Heart right ventricle (tissue), 16 donors: ENCODE measurements at regions of chr13 and their contacts with region 1.

Region 1: DNA sequence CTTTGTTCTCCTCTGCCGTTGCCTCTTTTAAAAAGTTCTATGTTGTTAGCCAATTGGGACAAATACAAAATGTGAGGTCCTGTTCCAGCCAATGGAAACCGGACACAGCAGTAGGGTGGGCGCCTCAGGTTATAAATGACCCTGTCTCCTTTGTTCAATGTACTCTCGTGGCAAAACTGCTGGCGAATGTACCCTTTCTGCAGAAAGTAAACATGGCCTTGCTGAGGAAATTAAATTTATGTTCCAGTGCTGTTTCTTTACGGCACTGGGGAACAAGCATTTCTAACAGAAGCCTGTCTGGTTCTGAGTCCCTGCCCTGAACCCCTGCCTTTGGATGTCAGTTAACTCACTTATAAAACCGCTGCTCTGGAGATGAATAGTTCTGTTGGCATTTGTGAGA is 140.7 kb downstream of the PCCA start:
- DNase-seq: no peak
- ATAC-seq: no peak
- H3K4me3 ChIP-seq: no peak overlapping the region
- H3K27ac ChIP-seq: no peak overlapping the region
- H3K4me1 ChIP-seq: peaks cover 0 to 27% (median 17%) of the 10 kb centered on the region in 9 donors
- H3K27me3 ChIP-seq: no peaks in the 10 kb centered on the region
- CTCF ChIP-seq: no peak

Region 2: GRCh38 chr13:99916366-99917103 is 313.1 kb before region 1 on chr13:
- intact Hi-C with region 1: loop called in 4 of 10 experiments (anchors 2 to 10 kb)
- DNase-seq: peak in 1 of 2 donors; percentile 19
- ATAC-seq: peak in 7 of 8 donors; percentile 51 to 70 (median 66)
- H3K4me3 ChIP-seq: no peak overlapping the region
- H3K27ac ChIP-seq: no peak overlapping the region
- H3K4me1 ChIP-seq: no peaks in the 10 kb centered on the region
- H3K27me3 ChIP-seq: peaks cover 0 to 52% (median 31%) of the 10 kb centered on the region in 7 donors
- CTCF ChIP-seq: peak; percentile 52 to 93 (median 82)

Region 3: DNA sequence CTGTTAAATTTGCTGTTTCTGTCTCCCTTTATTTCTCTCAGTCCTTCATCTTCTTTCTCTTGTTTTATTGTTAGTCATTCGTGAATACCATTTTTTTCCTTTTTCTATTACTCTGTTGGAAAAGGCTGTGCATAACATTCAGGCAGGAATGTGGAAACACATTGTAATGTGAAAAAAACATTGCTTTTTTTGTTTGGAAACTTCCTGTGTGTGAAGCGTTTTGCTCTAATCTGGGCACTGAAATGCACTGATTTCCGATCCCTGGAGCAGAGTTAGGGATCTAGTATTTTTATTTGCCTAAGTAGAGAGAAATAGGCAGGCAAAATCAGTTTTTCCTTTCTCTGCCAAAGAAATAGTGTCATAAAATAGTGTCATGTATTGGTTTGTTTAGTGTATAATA is 14.8 kb after region 1 on chr13:
- intact Hi-C with region 1: no loop called
- DNase-seq: no peak
- ATAC-seq: peak in 3 of 8 donors; percentile 27 to 58 (median 38)
- H3K4me3 ChIP-seq: no peak overlapping the region
- H3K27ac ChIP-seq: no peak overlapping the region
- H3K4me1 ChIP-seq: peaks cover 0 to 21% (median 4%) of the 10 kb centered on the region in 9 donors
- H3K27me3 ChIP-seq: no peaks in the 10 kb centered on the region
- CTCF ChIP-seq: no peak

Region 4: DNA sequence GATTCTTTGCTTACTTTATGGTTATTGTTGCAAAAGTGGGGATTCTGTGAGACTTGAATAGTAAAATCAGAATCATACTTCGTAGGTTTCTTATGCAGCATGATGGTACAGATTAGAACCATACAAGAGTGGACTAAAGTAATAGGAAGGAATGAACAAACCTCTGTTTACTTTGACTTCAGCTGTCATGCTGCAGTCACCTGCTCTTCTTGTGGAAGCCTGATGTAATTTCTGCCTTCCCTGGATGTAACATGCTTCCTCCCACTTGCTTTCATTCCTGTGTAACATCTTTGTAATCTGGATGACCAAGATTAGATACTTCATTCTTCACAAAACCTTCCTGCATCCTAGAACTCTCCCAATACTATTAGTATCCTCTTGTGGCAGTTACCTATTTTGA is 94.3 kb after region 1 on chr13:
- intact Hi-C with region 1: no loop called
- DNase-seq: no peak
- ATAC-seq: no peak
- H3K4me3 ChIP-seq: no peak overlapping the region
- H3K27ac ChIP-seq: no peak overlapping the region
- H3K4me1 ChIP-seq: no peaks in the 10 kb centered on the region
- H3K27me3 ChIP-seq: no peaks in the 10 kb centered on the region
- CTCF ChIP-seq: no peak

Region 5: GRCh38 chr13:100594731-100595130 is 365.1 kb after region 1 on chr13:
- intact Hi-C with region 1: no loop called
- DNase-seq: no peak
- ATAC-seq: no peak
- H3K4me3 ChIP-seq: no peak overlapping the region
- H3K27ac ChIP-seq: no peak overlapping the region
- H3K4me1 ChIP-seq: no peaks in the 10 kb centered on the region
- H3K27me3 ChIP-seq: no peaks in the 10 kb centered on the region
- CTCF ChIP-seq: peak in 1 of 9 donors; percentile 9